ENCODE measurements at regions of chr5 and their contacts with region 1.

Region 1: GRCh38 chr5:143142596-143143435 is 260.7 kb downstream of the NR3C1 start:
- DNase-seq: peak; percentile 56 to 68
- ATAC-seq: peak; percentile 37 to 62
- H3K4me3 ChIP-seq: no peak overlapping the region
- H3K27ac ChIP-seq: peak overlapping the region; percentile 90 to 97 (median 95)
- H3K4me1 ChIP-seq: peaks cover 82 to 85% of the 10 kb centered on the region in 2 donors
- H3K27me3 ChIP-seq: no peaks in the 10 kb centered on the region
- CTCF ChIP-seq: no peak
- POLR2A ChIP-seq: no peak

Region 2: DNA sequence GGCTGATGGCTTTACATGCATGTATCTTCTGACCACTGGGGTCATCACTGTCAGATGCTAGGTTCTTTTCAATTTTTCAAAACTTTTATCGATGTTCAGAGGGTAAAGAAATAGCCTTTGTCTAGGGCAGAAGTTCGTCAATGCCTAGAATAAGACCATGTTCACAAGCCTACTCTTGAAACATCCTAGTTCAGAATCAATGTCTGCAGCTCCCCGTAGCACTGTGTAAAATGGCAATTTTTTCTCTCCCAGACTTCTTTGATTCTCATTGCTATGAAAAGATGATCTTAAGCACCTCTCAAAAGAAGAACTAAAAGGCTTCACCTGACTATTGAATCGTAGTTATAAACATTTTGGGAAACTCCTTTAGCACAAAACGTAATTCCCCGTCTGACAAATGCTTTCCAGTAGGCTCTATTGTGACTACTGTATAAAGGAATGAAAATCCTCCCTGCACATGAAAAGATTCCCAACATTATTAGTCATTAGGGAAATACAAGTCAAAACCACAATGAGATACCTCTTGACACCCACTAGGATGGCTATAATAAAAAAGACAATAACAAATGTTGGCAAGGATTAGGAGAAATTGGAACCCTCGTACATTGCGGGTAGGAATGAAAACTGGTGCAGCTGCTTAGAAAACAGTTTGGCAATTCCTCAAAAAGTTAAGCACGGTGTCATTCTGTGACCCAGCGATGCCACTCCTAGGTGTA is 109.1 kb before region 1 on chr5:
- in situ Hi-C with region 1: loop called in 3 of 4 experiments (anchors 10 to 25 kb)
- intact Hi-C with region 1: no loop called
- DNase-seq: no peak
- ATAC-seq: peak; percentile 48 to 76
- H3K4me3 ChIP-seq: no peak overlapping the region
- H3K27ac ChIP-seq: peak overlapping the region in 3 of 4 donors; percentile 8 to 40 (median 30)
- H3K4me1 ChIP-seq: peaks cover 32 to 41% of the 10 kb centered on the region in 2 donors
- H3K27me3 ChIP-seq: no peaks in the 10 kb centered on the region
- CTCF ChIP-seq: no peak
- POLR2A ChIP-seq: no peak

Region 3: GRCh38 chr5:143041972-143042770 is 100.6 kb before region 1 on chr5:
- in situ Hi-C with region 1: loop called in 2 of 4 experiments (anchors 25 kb)
- intact Hi-C with region 1: loop called (anchors 5 kb)
- DNase-seq: peak; percentile 81 to 89
- ATAC-seq: peak; percentile 92 to 93
- H3K4me3 ChIP-seq: peak overlapping the region in 1 of 4 donors; percentile 2
- H3K27ac ChIP-seq: peak overlapping the region; percentile 88 to 91 (median 89)
- H3K4me1 ChIP-seq: peaks cover 15 to 24% of the 10 kb centered on the region in 2 donors
- H3K27me3 ChIP-seq: no peaks in the 10 kb centered on the region
- CTCF ChIP-seq: no peak
- POLR2A ChIP-seq: peak; percentile 50 to 55

Region 4: GRCh38 chr5:143057580-143057999 is 85.2 kb before region 1 on chr5:
- in situ Hi-C with region 1: loop called in 1 of 4 experiments (anchors 5 kb)
- intact Hi-C with region 1: loop called (anchors 1 kb)
- DNase-seq: peak in 1 of 2 donors; percentile 67
- ATAC-seq: peak; percentile 47 to 76
- H3K4me3 ChIP-seq: peak overlapping the region in 3 of 4 donors; percentile 0 to 15 (median 10)
- H3K27ac ChIP-seq: peak overlapping the region; percentile 86 to 91 (median 88)
- H3K4me1 ChIP-seq: peaks cover 93 to 97% of the 10 kb centered on the region in 2 donors
- H3K27me3 ChIP-seq: no peaks in the 10 kb centered on the region
- CTCF ChIP-seq: no peak
- POLR2A ChIP-seq: no peak

Region 5: GRCh38 chr5:143376911-143377813 is 234.3 kb after region 1 on chr5:
- in situ Hi-C with region 1: loop called in 1 of 4 experiments (anchors 25 kb)
- intact Hi-C with region 1: no loop called
- DNase-seq: peak in 1 of 2 donors; percentile 38
- ATAC-seq: peak in 1 of 2 donors; percentile 71
- H3K4me3 ChIP-seq: no peak overlapping the region
- H3K27ac ChIP-seq: peak overlapping the region; percentile 37 to 62 (median 41)
- H3K4me1 ChIP-seq: peaks cover 66 to 80% of the 10 kb centered on the region in 2 donors
- H3K27me3 ChIP-seq: no peaks in the 10 kb centered on the region
- CTCF ChIP-seq: no peak
- POLR2A ChIP-seq: no peak

Region 6: DNA sequence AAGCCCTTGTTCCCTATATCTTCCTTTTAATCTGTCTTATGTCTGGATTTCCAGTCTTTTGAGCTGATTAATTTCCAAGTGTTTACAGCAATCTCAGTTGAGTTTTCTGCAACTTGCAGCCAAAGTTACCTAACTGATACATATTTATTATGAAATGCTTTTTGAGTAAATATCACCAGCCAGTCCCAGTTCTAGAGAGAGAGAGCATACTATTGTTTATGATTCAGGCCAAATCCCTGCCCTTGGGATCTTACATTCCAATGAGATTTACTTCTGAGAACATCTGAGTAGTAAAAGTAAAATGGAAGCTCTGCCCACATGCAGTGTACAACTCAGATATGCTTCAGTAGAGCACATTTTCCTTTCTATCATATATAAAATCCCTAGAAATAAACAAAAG is 1689.6 kb after region 1 on chr5:
- in situ Hi-C with region 1: no loop called
- intact Hi-C with region 1: no loop called
- DNase-seq: no peak
- ATAC-seq: no peak
- H3K4me3 ChIP-seq: no peak overlapping the region
- H3K27ac ChIP-seq: no peak overlapping the region
- H3K4me1 ChIP-seq: no peaks in the 10 kb centered on the region
- H3K27me3 ChIP-seq: no peaks in the 10 kb centered on the region
- CTCF ChIP-seq: no peak
- POLR2A ChIP-seq: no peak